Activated B cell treated with CpG ODN at 0.5 μM for 24 hours (primary cell): ENCODE measurements at regions of chr3 and their contacts with region 1.

Region 1: GRCh38 chr3:66989860-66990665 is 8.0 kb upstream of the KBTBD8 start:
- DNase-seq: no peak
- ATAC-seq: peak; percentile 83
- H3K4me3 Mint-ChIP-seq: peak overlapping the region; percentile 83
- H3K27ac Mint-ChIP-seq: peak overlapping the region; percentile 87
- H3K4me1 Mint-ChIP-seq: peaks cover 5% of the 10 kb centered on the region
- H3K27me3 Mint-ChIP-seq: peaks cover 3% of the 10 kb centered on the region
- CTCF ChIP-seq: no peak

Region 2: GRCh38 chr3:67037615-67038014 is 47.6 kb after region 1 on chr3:
- CTCF ChIA-PET with region 1: interaction called, 37 read pairs
- POLR2A ChIA-PET with region 1: no interaction called
- intact Hi-C with region 1: loop called (anchors 1 kb)
- DNase-seq: no peak
- ATAC-seq: peak; percentile 28
- H3K4me3 Mint-ChIP-seq: no peak overlapping the region
- H3K27ac Mint-ChIP-seq: no peak overlapping the region
- H3K4me1 Mint-ChIP-seq: peaks cover 5% of the 10 kb centered on the region
- H3K27me3 Mint-ChIP-seq: no peaks in the 10 kb centered on the region
- CTCF ChIP-seq: no peak

Region 3: DNA sequence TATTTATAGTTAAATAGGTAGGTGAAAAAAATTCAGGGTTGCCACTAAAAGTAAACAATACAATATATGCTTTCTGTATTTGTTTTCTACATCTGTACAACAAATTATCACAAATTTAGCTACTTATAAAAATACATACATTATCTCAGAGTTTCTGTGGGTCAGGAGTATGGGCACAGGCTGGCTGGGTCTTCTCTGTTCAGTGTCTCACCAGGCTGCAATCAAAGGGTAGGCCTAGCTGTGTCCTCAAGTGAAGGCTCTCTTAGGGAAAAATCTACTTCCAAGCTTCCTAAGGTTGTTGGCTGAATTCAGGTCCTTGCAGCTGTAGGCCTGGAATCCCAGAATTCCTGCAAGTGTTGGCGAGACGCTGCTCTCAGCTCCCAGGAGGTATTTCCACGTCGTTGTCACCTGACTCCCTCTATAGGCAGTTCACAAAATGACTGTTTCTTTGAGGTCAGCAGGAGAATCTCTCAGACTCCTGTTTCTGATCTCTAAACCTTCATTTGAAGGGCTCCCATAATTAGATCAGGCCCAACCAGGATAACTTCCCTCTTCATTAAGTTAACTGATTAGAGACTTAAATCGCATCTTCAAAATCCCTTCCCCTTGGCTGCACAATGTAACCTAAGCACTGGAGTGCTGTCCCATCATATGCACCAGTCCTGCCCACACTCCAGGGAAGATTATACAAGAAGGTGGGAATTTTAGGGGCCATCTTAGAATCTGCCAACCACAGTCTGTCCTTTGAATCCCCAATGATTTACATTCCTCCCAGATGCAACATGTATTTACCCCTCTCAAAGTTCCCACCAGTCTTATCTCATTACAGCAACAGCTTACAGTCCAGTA is 367.8 kb after region 1 on chr3:
- CTCF ChIA-PET with region 1: interaction called, 4 read pairs
- POLR2A ChIA-PET with region 1: no interaction called
- intact Hi-C with region 1: loop called (anchors 5 kb)
- DNase-seq: no peak
- ATAC-seq: no peak
- H3K4me3 Mint-ChIP-seq: no peak overlapping the region
- H3K27ac Mint-ChIP-seq: no peak overlapping the region
- H3K4me1 Mint-ChIP-seq: no peaks in the 10 kb centered on the region
- H3K27me3 Mint-ChIP-seq: no peaks in the 10 kb centered on the region
- CTCF ChIP-seq: no peak

Region 4: DNA sequence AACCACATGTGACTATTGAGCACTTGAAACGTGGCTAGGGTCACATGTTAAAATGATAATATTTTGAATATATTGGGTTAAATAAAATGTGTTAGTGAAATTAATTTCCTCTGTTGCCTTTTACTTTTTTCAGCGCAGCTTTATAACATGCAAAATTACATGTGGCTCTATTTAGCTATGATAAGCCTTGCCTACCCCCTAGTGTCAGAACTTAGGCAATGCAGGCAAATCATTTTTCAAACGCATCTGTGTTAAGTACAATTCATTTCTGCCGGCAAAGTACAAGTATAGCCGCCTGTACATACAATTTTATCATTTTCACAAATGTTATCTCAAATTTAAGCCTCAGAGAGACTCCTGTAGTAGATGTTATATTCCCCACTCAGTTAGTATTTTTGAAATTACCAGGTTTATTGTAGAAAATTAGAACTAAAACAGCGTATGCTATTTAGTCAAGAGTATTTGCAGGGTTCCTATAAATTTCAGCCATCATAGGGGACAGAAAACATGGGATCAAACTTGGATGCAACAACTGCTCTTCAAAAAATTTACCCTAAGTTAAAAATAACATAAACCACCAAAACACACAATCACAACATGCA is 1886.2 kb after region 1 on chr3:
- CTCF ChIA-PET with region 1: no interaction called
- POLR2A ChIA-PET with region 1: no interaction called
- intact Hi-C with region 1: loop called (anchors 5 kb)
- DNase-seq: no peak
- ATAC-seq: peak; percentile 69
- H3K4me3 Mint-ChIP-seq: no peak overlapping the region
- H3K27ac Mint-ChIP-seq: no peak overlapping the region
- H3K4me1 Mint-ChIP-seq: no peaks in the 10 kb centered on the region
- H3K27me3 Mint-ChIP-seq: peaks cover 23% of the 10 kb centered on the region
- CTCF ChIP-seq: peak; percentile 32